ENCODE measurements at regions of chr5 and their contacts with region 1.

Region 1: DNA sequence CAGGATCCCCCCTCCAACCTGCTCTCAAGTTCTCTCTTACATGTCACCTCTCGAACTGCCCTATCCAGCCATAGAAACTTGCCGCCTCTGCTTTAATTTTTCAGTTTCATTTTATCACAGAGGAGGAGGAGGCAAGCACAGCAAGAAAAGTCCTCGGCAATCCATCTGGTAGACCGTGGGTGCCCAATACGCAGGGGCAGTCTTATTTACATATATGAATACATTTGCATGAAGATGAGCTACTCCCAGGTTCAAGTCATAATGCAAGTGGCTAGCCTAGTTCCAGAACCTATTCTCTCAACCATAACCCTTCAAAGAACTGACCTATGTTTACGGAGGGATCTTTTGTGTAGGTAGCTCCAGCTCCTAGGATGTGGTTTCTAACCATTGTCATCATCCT is 223.2 kb upstream of the PANK3 start:
- DNase-seq: no peak
- H3K4me3 Mint-ChIP-seq: peak overlapping the region; percentile 70
- H3K27ac Mint-ChIP-seq: peak overlapping the region; percentile 79
- H3K4me1 Mint-ChIP-seq: peaks cover 32% of the 10 kb centered on the region
- H3K27me3 Mint-ChIP-seq: peaks cover 3% of the 10 kb centered on the region

Region 2: DNA sequence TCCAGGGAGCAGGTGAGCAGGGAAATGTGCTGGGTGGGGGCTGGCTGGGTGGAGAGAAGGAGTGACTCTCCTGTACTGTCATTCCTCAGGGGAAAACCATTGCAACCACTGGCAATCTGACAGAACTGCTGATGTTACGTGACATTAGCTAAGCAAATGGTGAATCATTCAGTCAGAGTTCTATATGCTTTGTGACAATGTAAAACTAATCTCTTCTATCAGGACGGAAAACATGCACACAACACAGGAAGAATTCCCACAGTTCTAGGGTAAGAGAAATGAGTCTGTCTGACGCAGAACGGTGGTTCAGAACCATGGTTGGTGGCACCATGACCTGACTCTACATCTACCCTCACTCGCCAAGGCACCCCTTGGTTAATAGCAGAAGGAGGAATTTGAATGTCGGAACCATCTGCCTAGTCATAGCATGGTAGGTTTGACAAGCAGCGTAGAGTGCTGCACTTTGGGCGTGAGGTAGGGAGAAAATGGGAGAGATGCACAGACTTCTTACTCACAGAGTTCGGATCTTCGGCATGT is 20.5 kb after region 1 on chr5:
- intact Hi-C with region 1: loop called (anchors 2 kb)
- DNase-seq: no peak
- H3K4me3 Mint-ChIP-seq: peak overlapping the region; percentile 1
- H3K27ac Mint-ChIP-seq: peak overlapping the region; percentile 5
- H3K4me1 Mint-ChIP-seq: peaks cover 12% of the 10 kb centered on the region
- H3K27me3 Mint-ChIP-seq: peaks cover 7% of the 10 kb centered on the region

Region 3: DNA sequence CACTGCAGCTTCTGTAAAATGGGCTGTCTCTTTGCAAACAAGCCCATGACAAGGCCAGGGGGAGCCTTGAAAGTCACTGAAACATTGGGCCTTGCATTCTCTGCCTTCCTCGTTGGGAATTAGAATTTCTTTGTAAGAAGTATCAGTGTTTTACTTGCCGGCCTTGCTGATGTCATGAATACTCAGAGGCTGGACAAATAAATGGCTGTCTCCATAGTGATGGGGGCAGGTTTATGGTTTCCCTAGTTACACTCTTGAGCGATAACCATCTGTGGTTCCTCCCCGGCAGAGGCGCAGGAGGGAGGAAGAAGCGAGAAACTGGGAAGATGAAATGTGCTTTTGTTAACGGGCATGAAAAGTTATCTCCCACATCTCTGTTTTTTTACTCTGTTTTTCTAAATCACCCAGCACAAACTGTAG is 49.6 kb after region 1 on chr5:
- intact Hi-C with region 1: loop called (anchors 1 kb)
- DNase-seq: peak; percentile 26
- H3K4me3 Mint-ChIP-seq: peak overlapping the region; percentile 54
- H3K27ac Mint-ChIP-seq: peak overlapping the region; percentile 77
- H3K4me1 Mint-ChIP-seq: peaks cover 20% of the 10 kb centered on the region
- H3K27me3 Mint-ChIP-seq: peaks cover 14% of the 10 kb centered on the region